ENCODE measurements at regions of chr6 and their contacts with region 1.

Region 1: GRCh38 chr6:151765444-151765886 is 42.0 kb upstream of the ESR1 start:
- DNase-seq: peak in 1 of 2 donors; percentile 80
- H3K4me3 ChIP-seq: no peak overlapping the region
- CTCF ChIP-seq: peak in 1 of 3 donors; percentile 16
- POLR2A ChIP-seq: no peak

Region 2: DNA sequence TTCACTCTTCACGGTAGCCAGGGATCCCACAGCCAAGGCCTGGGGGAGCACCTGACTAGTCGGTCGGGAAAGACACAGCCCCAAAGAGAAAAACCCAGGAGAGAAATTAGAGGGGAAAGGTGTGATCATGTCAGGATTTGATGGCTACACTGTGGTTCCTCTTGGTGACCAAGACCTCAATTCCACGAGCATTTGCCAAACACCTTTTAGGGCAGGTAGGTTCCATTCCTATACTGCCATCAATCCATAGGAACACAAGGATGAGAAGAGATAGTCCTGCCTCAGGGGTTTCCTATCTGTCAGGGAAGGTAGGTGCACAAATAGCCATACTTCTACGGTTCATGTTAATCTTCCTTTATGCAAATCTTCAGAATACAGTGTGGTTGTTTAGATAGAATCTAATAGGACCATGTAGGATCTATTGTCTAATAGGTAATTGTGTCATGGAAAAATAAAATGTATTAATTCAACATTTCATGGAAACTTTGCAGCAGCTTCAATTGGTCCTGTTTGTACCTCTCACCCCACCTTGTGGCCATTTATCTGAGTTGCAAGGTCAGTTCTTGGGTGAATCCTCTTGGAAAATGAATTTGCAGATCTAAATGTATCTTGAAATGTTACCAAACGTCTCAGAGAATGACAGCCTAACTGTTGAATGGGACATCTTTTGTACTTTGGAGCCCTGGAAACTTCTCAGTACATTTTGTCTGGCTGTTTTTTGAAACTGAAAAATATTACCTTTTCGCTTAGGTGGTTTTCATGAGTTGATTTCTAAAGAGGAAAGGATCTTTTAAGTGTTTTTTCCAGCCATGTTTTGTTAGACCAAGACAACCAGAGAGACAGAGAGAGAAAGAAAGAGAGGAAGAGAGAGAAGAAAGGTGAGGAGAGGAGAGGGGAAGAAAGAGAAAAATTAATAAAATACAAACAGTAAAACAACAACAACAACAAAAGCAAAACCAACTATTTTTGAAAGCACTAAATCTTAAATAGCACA is 1430.4 kb before region 1 on chr6:
- intact Hi-C with region 1: no loop called
- DNase-seq: peak in 1 of 2 donors; percentile 46
- H3K4me3 ChIP-seq: no peak overlapping the region
- CTCF ChIP-seq: peak in 1 of 3 donors; percentile 57
- POLR2A ChIP-seq: no peak

Region 3: GRCh38 chr6:151747896-151748295 is 17.6 kb before region 1 on chr6:
- intact Hi-C with region 1: loop called (anchors 1 kb)
- DNase-seq: no peak
- H3K4me3 ChIP-seq: no peak overlapping the region
- CTCF ChIP-seq: no peak
- POLR2A ChIP-seq: no peak

Region 4: DNA sequence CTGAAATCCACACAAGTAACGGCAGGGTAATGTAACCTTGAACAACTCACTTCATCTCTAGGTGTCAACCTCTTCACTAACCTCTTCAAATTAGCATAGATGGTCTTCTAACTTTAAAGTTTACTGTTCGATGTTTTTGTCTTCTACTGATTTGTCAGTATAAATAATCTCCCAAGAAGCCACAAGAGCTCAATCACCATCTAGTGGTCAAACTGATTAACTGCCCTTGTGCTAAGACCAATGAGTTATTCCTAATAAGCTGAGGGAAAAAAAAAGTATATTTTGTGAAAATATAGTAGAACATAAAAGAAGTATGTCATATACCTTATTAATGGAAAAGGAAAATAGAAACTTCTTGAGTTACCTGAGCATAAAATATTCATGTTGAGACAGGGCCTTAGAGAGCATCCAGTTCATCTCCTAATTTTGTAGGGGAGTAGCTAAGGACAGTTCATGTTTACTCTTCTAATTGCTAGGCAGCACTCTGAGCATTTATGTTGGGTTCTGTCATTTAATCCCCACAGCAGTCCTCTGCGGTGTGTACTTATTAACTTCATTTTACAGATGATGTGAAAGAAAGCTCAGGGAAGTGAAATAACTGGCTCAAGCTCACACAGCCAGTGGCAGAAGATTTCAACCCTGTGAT is 359.1 kb after region 1 on chr6:
- intact Hi-C with region 1: loop called (anchors 10 kb)
- DNase-seq: no peak
- H3K4me3 ChIP-seq: no peak overlapping the region
- CTCF ChIP-seq: no peak
- POLR2A ChIP-seq: no peak

Region 5: GRCh38 chr6:152267967-152268845 is 502.7 kb after region 1 on chr6:
- intact Hi-C with region 1: loop called (anchors 5 kb)
- DNase-seq: no peak
- H3K4me3 ChIP-seq: no peak overlapping the region
- CTCF ChIP-seq: no peak
- POLR2A ChIP-seq: no peak

Measured in lower leg skin (tissue), 4 donors.